Sciatic nerve (tissue), 2 donors: ENCODE measurements at regions of chr20 and their contacts with region 1.

Region 1: DNA sequence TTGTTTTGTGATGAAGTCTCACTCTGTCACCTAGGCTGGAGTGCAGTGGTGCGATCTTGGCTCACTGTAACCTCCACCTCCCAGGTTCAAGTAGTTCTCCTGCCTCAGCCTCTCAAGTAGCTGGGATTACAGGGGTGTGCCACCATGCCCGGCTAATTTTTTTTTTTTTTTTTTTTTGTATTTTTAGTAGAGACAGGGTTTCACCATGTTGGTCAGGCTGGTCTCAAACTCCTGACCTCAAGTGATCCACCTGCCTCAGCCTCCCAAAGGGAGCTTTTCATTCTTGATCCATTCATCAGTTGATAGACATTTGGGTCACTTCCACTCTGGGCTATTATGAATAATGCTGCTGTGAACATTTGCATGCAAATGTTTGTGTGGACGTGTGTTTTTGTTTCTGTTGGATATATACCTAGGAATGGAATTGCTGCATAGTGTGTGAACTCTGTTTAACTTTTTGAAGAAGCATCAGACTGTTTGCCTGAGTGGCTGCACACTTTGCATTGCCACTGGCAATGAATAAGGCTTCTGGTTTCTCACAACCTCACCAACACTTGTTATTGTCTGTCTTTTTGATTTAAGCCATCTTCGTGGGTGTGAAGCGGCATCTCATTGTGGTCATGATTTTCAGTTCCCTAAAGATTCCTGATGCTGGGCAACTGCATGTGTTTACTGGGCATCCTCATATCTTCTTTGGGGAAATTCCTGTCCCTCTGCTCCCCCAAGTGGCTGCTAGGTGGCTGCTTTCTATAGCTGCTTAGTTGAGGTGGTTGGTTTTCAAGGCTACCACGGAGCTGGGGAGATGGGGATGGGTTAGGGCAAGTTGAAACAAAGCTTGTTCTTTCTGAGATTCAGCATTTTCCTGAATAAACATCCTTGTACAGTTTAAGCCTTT is 403.6 kb upstream of the SULF2 start:
- DNase-seq: no peak
- ATAC-seq: no peak

Region 2: GRCh38 chr20:48126227-48126740 is 62.6 kb before region 1 on chr20:
- intact Hi-C with region 1: loop called (anchors 2 kb)
- DNase-seq: no peak
- ATAC-seq: no peak

Region 3: DNA sequence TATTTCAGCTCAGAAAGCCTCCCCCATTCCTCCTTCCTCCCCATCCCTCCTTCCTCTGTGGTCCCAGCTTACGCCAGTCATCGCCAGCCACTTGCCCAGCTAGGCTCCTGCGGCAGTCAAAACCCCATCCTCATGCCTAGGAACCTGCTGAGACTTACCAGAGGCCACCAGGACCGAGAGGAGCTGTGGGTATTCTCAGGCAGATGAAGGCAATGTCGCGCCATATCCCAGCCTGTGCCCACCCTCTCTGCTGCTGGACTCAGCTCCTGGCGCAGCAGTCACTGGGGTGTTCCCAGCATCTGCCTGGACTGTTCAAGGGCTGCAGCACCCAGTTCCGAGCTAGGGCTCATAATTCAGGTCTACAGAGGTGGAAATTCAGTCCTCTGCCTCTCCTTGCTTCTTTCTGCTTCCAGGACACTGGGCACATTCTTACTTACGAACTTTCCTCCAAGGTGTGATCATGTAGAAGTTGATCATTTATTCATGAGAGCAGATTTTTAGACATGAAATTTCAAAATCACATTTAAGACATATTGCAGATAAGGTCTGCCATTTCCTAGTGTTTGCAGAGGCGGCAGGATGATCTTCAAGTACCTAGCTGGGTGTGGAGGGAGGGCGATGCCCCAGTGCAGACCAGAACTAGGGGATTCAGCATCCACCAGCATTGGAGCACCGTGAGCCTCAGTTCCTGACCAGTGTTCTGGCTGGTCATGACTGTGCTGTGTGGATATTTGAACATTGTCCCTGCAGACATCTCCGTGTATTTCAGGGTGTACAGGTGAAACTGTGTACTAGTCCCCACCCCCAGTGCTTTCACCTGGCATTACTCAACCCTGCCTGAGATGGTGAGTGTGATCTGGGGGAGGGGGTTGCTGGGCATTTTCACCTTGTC is 51.3 kb before region 1 on chr20:
- intact Hi-C with region 1: no loop called
- DNase-seq: no peak
- ATAC-seq: no peak

Region 4: DNA sequence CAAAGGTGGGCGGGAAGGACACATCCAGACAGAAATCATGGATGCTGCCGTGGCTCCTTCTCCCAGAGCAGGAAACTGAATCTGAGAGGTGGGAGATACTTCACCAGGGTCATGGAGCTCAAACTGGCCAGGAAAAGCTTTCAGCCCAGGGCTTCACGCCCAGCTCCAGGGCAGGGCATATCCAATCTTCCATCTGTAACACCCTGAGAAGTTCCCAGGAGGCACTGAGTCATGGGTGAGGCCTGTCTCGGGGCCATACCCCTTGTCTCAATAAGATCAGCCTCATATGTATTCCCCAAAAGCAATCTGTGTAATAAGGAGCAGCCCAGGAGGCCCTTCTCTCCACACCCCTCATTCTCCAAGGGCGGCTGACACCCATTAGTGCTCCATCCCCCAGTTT is 35.6 kb after region 1 on chr20:
- intact Hi-C with region 1: no loop called
- DNase-seq: no peak
- ATAC-seq: no peak

Region 5: DNA sequence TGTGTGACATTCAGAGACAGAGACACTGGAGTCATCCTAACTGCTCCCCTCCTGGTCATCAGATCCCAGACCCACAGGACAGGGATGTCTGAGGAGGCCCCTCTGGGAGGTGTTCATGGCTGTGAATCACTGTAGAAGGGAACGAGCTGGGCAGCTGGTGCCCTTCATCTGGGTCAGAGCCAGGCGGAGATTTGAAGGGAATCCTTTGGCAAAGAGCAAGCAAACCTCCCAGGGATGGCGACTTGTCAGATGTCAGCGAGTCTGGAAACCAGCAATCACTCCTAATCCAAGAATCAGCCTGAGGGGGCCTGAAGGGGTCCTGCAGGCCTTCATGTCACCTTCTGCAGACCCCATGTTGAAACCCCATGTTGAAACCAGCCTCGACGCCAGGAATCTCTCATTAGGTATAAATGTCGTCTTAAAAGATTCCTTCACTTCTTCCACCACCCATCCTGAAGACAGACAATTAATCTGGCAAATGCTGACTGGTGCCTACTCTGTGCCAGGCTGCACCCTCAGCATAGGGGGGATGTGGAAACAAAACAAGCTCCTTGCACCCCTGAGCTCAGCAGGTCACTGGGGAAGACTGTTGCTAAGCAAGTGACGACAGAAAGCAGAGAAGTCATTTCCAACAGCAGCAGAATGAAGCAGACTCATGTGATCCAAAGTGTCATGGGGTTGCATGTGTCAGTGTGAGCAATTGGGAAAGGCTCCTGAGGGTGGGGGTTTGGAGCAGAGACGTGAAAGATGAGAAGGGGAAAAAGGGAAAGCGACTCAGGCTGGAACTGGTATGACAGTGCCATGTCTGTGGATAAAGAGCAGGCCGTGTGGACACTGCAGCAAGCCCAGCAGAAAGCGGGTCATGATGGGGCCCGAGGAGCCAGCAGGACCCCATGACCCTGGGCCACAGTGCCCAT is 274.8 kb after region 1 on chr20:
- intact Hi-C with region 1: no loop called
- DNase-seq: no peak
- ATAC-seq: peak; percentile 67

Region 6: GRCh38 chr20:49286689-49287551 is 1098.0 kb after region 1 on chr20:
- intact Hi-C with region 1: no loop called
- DNase-seq: no peak
- ATAC-seq: no peak